PC-9 (cell line): ENCODE measurements at regions of chr15 and their contacts with region 1.

Region 1: DNA sequence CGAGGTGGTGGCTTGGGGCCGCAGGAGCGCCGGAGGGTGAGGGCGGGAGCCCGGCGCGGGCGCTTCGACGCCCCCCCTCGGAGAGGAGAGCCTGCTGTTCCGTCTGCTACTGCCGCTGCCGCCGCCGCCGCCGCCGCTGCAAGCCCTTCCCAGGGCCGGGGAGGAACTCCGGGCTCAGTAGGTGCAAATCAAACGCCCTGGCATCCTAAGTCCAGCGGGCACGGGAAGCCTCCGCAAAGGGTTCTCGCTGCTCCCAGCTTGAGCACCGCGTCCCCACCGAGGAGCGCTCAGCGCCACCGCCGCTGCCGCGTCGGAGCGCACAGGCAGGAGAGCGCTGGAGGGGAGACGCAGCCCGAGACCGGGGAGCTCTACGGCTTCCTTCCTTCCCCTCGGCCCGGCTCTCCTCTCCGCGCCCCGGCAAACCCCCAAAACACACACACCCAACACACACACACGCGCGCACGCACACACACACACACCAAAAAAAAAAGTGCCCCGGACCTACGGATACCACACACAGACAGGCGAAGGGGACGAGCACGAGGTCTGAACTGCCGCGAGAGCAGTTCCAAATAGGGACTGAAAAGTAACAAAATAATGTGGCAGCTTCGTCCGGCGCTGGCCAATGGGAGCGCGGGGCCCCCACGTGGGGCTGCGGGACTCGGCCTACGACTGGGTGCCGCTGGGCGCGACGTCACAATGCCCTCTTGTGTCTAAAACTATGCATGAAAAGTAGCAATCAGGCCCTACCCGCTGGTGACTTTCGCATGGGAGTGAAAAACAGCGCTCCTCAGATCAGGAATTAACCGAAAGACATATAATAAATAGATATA is at the start of gene TLE3:
- DNase-seq: peak; percentile 91 to 97
- H3K4me3 ChIP-seq: peak within 1 kb of the TSS; percentile 84
- H3K27ac ChIP-seq: peak within 1 kb of the TSS; percentile 78
- H3K4me1 ChIP-seq: peaks cover 48% of the 10 kb centered on the region
- H3K27me3 ChIP-seq: no peaks in the 10 kb centered on the region
- CTCF ChIP-seq: peak; percentile 55; the same call in 1 of the 2 replicates
- total RNA-seq, gene TLE3: 51.3 and 72.4 TPM in 2 replicates

Region 2: GRCh38 chr15:69604072-69604411 is 493.5 kb before region 1 on chr15:
- CTCF ChIA-PET with region 1: no interaction called
- POLR2A ChIA-PET with region 1: no interaction called
- intact Hi-C with region 1: loop called (anchors 2 kb)
- DNase-seq: peak; percentile 44 to 84
- H3K4me3 ChIP-seq: no peak overlapping the region
- H3K27ac ChIP-seq: no peak overlapping the region
- H3K4me1 ChIP-seq: peaks cover 12% of the 10 kb centered on the region
- H3K27me3 ChIP-seq: 0 out of 2 replicates have a peak, but pooled peaks cover 6% of the 10 kb centered on the region
- CTCF ChIP-seq: peak; percentile 68

Region 3: GRCh38 chr15:69951907-69952555 is 145.5 kb before region 1 on chr15:
- CTCF ChIA-PET with region 1: no interaction called
- POLR2A ChIA-PET with region 1: no interaction called
- intact Hi-C with region 1: no loop called
- DNase-seq: no peak
- H3K4me3 ChIP-seq: no peak overlapping the region
- H3K27ac ChIP-seq: no peak overlapping the region
- H3K4me1 ChIP-seq: 0 out of 2 replicates have a peak, but pooled peaks cover 6% of the 10 kb centered on the region
- H3K27me3 ChIP-seq: no peaks in the 10 kb centered on the region
- CTCF ChIP-seq: no peak

Region 4: DNA sequence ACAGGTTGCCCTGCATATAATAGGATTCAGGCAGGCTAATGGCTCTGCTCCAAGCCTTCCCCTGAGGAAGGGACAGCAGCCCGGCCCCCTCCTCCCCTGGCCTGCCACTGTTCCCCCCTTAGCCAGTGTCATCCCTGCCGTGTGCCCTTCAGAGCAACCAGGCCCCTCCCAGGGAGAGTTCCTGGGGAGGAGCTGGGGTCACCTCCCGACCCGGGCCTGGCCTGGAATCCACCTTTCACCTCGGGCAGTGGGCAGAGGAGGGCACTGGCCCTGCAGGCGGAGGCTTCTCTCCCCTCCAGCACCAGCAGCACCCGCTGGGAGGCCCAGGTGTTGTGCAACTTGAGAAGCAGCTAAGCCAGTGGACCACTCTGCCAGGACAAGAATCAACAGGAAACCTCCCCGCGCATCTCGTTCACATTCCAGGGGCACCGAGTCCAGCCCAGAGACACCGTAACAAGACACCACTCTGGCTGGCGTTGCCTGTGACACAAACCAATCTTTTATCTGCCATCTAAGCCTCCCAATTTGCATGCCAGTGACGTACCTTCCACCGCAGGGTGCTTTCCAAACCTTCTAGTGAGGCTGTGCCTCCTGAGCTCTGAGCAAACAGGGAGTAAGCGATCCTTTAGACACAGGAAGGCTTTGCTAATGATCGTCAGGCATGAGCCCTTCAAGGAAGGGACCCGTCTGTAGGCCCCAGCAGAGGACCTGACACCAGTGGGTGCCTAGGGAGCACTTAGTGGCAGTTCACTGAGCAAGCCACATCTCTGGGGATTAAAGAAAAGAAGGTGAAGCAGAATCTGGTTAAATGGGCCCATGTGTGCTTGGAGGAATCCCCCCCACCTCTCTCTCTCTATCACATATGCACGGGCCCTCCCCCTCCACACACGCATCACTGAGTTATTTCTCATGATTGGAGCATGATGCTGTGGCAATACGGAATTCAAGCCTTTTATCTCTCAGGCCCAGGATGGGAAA is 99.0 kb after region 1 on chr15:
- CTCF ChIA-PET with region 1: interaction called, 9 read pairs
- POLR2A ChIA-PET with region 1: interaction called, 3 read pairs
- intact Hi-C with region 1: loop called (anchors 1 kb)
- DNase-seq: peak; percentile 96 to 98
- H3K4me3 ChIP-seq: peak overlapping the region; percentile 7; the same call in 1 of the 2 replicates
- H3K27ac ChIP-seq: peak overlapping the region; percentile 85
- H3K4me1 ChIP-seq: peaks cover 53% of the 10 kb centered on the region
- H3K27me3 ChIP-seq: no peaks in the 10 kb centered on the region
- CTCF ChIP-seq: no peak

Region 5: GRCh38 chr15:70327856-70328678 is 230.5 kb after region 1 on chr15:
- CTCF ChIA-PET with region 1: no interaction called
- POLR2A ChIA-PET with region 1: interaction called, 15 read pairs
- intact Hi-C with region 1: no loop called
- DNase-seq: peak in 1 of 2 experiments; percentile 49
- H3K4me3 ChIP-seq: no peak overlapping the region
- H3K27ac ChIP-seq: no peak overlapping the region
- H3K4me1 ChIP-seq: peaks cover 31% of the 10 kb centered on the region
- H3K27me3 ChIP-seq: no peaks in the 10 kb centered on the region
- CTCF ChIP-seq: no peak

Region 6: GRCh38 chr15:70488002-70488605 is 390.6 kb after region 1 on chr15:
- CTCF ChIA-PET with region 1: interaction called, 5 read pairs
- POLR2A ChIA-PET with region 1: no interaction called
- intact Hi-C with region 1: loop called (anchors 1 kb)
- DNase-seq: peak; percentile 57 to 68
- H3K4me3 ChIP-seq: no peak overlapping the region
- H3K27ac ChIP-seq: 0 out of 2 replicates have a peak overlapping the region, but pooled peaks have one; percentile 91
- H3K4me1 ChIP-seq: peaks cover 53% of the 10 kb centered on the region
- H3K27me3 ChIP-seq: no peaks in the 10 kb centered on the region
- CTCF ChIP-seq: peak; percentile 95

Region 7: GRCh38 chr15:70643783-70644125 is 546.2 kb after region 1 on chr15:
- CTCF ChIA-PET with region 1: no interaction called
- POLR2A ChIA-PET with region 1: no interaction called
- intact Hi-C with region 1: loop called (anchors 10 kb)
- DNase-seq: peak; percentile 23 to 87
- H3K4me3 ChIP-seq: no peak overlapping the region
- H3K27ac ChIP-seq: peak overlapping the region; percentile 68
- H3K4me1 ChIP-seq: peaks cover 27% of the 10 kb centered on the region
- H3K27me3 ChIP-seq: no peaks in the 10 kb centered on the region
- CTCF ChIP-seq: no peak